PC-9 (cell line): ENCODE measurements at regions of chr7 and their contacts with region 1.

Region 1: GRCh38 chr7:23712368-23713284 is 2.6 kb downstream of the STK31 start:
- DNase-seq: peak in 1 of 2 experiments; percentile 71
- H3K4me3 ChIP-seq: no peak overlapping the region
- H3K27ac ChIP-seq: no peak overlapping the region
- H3K4me1 ChIP-seq: peaks cover 22% of the 10 kb centered on the region
- H3K27me3 ChIP-seq: no peaks in the 10 kb centered on the region
- CTCF ChIP-seq: peak; percentile 95

Region 2: GRCh38 chr7:23273141-23273599 is 439.5 kb before region 1 on chr7:
- CTCF ChIA-PET with region 1: interaction called, 6 read pairs
- POLR2A ChIA-PET with region 1: no interaction called
- intact Hi-C with region 1: loop called (anchors 1 kb)
- DNase-seq: peak; percentile 98 to 99
- H3K4me3 ChIP-seq: peak overlapping the region; percentile 42
- H3K27ac ChIP-seq: peak overlapping the region; percentile 60
- H3K4me1 ChIP-seq: peaks cover 19% of the 10 kb centered on the region
- H3K27me3 ChIP-seq: no peaks in the 10 kb centered on the region
- CTCF ChIP-seq: peak; percentile 98

Region 3: DNA sequence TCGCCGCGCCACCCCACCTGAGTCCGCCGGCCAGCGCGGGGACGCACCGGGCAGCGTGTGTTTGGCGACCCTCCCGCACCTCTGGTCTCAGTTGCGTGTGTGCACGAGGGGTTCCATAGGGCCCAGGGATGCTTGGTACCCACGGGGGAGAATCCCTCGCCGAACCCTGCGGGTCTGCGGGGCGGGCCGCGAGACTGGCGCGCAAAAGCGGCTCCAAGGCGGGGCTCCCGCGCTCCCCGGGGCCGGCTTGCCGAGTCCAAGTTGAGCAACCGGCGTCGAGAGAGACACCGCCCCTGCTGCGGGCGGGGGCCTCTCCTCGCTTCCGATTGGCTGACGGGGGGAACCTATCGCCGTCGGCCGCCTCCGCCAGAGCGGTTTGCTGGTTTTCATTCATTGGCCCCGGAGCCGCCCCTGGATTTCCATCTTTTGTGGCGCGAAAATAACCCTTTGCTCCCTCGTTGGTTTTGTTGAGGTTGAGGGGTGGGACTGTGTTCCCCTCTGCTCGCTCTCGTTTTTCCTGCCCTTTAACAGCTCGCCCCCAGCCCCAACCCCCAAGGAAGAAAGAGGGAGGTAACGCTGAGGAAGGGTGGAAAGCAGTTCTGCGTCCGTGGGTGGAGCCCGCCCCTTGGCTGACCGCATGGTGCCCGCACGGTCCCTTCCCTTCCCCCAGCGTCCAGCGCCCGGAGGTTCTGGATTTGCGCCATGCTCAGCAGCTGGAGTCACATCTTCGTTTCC is 238.4 kb before region 1 on chr7:
- CTCF ChIA-PET with region 1: no interaction called
- POLR2A ChIA-PET with region 1: no interaction called
- intact Hi-C with region 1: loop called (anchors 10 kb)
- DNase-seq: peak; percentile 96 to 99
- H3K4me3 ChIP-seq: peak overlapping the region; percentile 73
- H3K27ac ChIP-seq: peak overlapping the region; percentile 92
- H3K4me1 ChIP-seq: peaks cover 39% of the 10 kb centered on the region
- H3K27me3 ChIP-seq: no peaks in the 10 kb centered on the region
- CTCF ChIP-seq: no peak

Region 4: GRCh38 chr7:23597094-23598091 is 115.2 kb before region 1 on chr7 and contains the start of gene CCDC126:
- CTCF ChIA-PET with region 1: interaction called, 21 read pairs
- POLR2A ChIA-PET with region 1: no interaction called
- intact Hi-C with region 1: no loop called
- DNase-seq: peak; percentile 87 to 95
- H3K4me3 ChIP-seq: peak within 1 kb of the TSS; percentile 66
- H3K27ac ChIP-seq: peak within 1 kb of the TSS; percentile 58
- H3K4me1 ChIP-seq: peaks cover 40% of the 10 kb centered on the region
- H3K27me3 ChIP-seq: no peaks in the 10 kb centered on the region
- CTCF ChIP-seq: no peak
- total RNA-seq, gene CCDC126: 5.9 and 6.2 TPM in 2 replicates

Region 5: DNA sequence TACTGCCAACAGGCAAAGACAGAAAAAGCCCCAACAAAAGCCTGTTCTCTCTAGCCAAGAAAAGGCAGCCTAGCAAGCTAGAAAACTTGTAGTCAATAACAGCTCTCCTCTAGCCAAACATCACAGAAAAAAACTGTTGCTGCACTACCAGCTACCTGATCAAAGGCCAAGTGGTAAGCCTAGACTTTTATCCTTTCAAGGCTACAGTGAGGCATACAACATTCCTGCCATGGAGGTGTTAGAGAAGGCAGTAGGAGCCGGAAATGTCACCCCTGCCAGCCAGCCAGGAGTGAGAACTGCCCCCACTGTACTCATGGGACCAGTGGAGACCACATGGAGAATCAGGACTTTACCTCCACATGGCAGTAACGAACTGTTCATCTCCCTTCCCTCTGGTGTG is 84.3 kb before region 1 on chr7:
- CTCF ChIA-PET with region 1: no interaction called
- POLR2A ChIA-PET with region 1: no interaction called
- intact Hi-C with region 1: no loop called
- DNase-seq: no peak
- H3K4me3 ChIP-seq: no peak overlapping the region
- H3K27ac ChIP-seq: no peak overlapping the region
- H3K4me1 ChIP-seq: no peaks in the 10 kb centered on the region
- H3K27me3 ChIP-seq: no peaks in the 10 kb centered on the region
- CTCF ChIP-seq: no peak

Region 6: DNA sequence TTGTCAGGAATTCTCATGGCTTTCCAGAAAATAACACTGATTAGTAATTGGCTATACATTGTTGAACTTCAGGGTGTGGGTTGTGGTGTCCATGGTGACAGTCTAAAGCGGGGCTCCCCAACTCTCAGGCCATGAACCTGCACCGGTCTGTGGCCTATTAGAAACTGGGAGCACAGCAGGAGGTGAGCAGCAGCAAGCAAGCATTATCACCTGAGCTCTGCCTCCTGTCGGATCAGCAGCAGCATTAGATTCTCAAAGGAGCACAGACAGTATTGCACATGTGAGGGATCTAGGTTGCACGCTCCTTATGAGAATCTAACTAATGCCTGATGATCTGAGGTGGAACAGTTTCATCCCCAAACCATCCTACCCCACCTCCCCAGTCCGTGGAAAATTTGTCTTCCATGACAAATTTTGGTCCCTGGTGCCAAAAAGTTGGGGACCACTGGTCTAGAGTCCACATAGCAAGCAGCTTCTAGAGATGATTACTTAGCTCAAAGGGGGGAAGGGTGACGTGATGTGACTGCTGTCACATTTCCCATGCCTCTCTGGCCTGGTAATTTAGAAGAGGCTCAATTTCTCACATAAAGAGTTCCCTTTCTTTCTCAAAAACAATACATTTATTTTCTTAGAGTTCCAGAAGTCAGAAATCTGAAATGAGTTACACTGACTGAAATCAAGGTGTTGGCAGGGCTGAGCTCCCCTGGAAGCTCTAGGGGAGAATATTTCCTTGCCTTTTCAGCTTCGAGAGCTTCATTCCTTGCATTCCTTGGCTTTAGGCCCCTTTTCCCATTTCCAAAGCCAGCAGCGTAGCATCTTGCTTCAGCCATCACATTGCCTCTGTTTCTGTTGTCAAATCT is 50.3 kb before region 1 on chr7:
- CTCF ChIA-PET with region 1: no interaction called
- POLR2A ChIA-PET with region 1: no interaction called
- intact Hi-C with region 1: no loop called
- DNase-seq: no peak
- H3K4me3 ChIP-seq: no peak overlapping the region
- H3K27ac ChIP-seq: no peak overlapping the region
- H3K4me1 ChIP-seq: no peaks in the 10 kb centered on the region
- H3K27me3 ChIP-seq: no peaks in the 10 kb centered on the region
- CTCF ChIP-seq: no peak

Region 7: GRCh38 chr7:23687011-23687410 is 25.6 kb before region 1 on chr7:
- CTCF ChIA-PET with region 1: interaction called, 3 read pairs
- POLR2A ChIA-PET with region 1: no interaction called
- intact Hi-C with region 1: loop called (anchors 1 kb)
- DNase-seq: peak; percentile 63 to 83
- H3K4me3 ChIP-seq: no peak overlapping the region
- H3K27ac ChIP-seq: no peak overlapping the region; the same call in 1 of the 2 replicates
- H3K4me1 ChIP-seq: peaks cover 14% of the 10 kb centered on the region
- H3K27me3 ChIP-seq: no peaks in the 10 kb centered on the region
- CTCF ChIP-seq: no peak

Region 8: GRCh38 chr7:23863209-23863798 is 150.7 kb after region 1 on chr7:
- CTCF ChIA-PET with region 1: no interaction called
- POLR2A ChIA-PET with region 1: interaction called, 5 read pairs
- intact Hi-C with region 1: loop called (anchors 5 kb)
- DNase-seq: peak in 1 of 2 experiments; percentile 51
- H3K4me3 ChIP-seq: no peak overlapping the region
- H3K27ac ChIP-seq: no peak overlapping the region
- H3K4me1 ChIP-seq: peaks cover 22% of the 10 kb centered on the region
- H3K27me3 ChIP-seq: no peaks in the 10 kb centered on the region
- CTCF ChIP-seq: peak; percentile 98

Region 9: GRCh38 chr7:24123061-24123460 is 410.4 kb after region 1 on chr7:
- CTCF ChIA-PET with region 1: no interaction called
- POLR2A ChIA-PET with region 1: no interaction called
- intact Hi-C with region 1: no loop called
- DNase-seq: no peak
- H3K4me3 ChIP-seq: no peak overlapping the region
- H3K27ac ChIP-seq: no peak overlapping the region
- H3K4me1 ChIP-seq: peaks cover 4% of the 10 kb centered on the region
- H3K27me3 ChIP-seq: no peaks in the 10 kb centered on the region
- CTCF ChIP-seq: no peak

Region 10: DNA sequence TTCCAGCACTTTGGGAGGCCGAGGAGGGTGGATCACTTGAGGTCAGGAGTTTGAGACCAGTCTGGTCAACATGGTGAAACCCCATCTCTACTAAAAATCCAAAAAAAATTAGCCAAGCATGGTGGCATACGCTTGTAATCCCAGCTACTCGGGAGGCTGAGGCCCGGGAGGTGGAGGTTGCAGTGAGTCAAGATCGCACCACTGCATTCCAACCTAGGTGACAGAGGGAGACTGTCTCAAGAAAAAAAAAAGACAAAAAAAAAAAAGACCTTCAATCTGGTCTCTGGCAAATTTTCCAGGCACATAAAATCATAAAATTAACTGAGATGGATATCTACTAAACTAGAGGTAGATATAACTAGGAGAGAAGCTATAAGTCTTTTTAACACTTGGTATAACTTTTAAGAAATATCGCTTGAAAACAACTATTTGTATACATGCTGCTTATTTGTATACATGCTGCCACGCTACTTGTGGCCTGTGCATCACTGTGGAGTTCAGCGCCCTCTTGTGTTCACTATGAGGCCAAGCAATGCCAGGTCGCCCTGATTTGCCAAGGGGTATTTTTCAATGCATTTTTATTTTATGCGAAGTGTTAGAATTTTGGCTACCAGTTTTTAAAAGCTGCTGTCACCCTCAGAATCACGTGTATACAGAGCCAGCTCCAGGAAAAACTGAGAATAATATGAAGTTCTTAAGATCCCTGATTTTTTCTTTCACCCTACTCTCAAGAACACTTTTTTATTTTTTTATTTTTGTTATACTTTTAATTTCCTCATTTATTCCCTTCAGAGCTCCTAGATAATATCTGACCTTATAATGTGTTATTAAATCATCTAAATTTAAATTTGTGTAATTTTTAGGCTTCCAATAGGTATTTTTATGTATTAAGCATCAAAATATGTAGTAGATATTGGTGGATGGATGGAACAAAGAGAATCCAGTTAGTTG is 1385.7 kb after region 1 on chr7:
- CTCF ChIA-PET with region 1: interaction called, 3 read pairs
- POLR2A ChIA-PET with region 1: no interaction called
- intact Hi-C with region 1: loop called (anchors 1 kb)
- DNase-seq: peak; percentile 64 to 76
- H3K4me3 ChIP-seq: peak overlapping the region; percentile 18; the same call in 1 of the 2 replicates
- H3K27ac ChIP-seq: no peak overlapping the region
- H3K4me1 ChIP-seq: peaks cover 11% of the 10 kb centered on the region; the same call in 1 of the 2 replicates
- H3K27me3 ChIP-seq: no peaks in the 10 kb centered on the region
- CTCF ChIP-seq: peak; percentile 99